Activated B cell treated with CpG ODN at 0.5 μM for 24 hours (primary cell): ENCODE measurements at regions of chr1 and their contacts with region 1.

Region 1: GRCh38 chr1:178542560-178543356 is 29.8 kb downstream of the TEX35 start:
- DNase-seq: peak; percentile 100
- ATAC-seq: peak; percentile 82
- H3K4me3 Mint-ChIP-seq: peak overlapping the region; percentile 97
- H3K27ac Mint-ChIP-seq: peak overlapping the region; percentile 96
- H3K4me1 Mint-ChIP-seq: peaks cover 47% of the 10 kb centered on the region
- H3K27me3 Mint-ChIP-seq: no peaks in the 10 kb centered on the region
- CTCF ChIP-seq: peak; percentile 85

Region 2: GRCh38 chr1:178607718-178608408 is 65.1 kb after region 1 on chr1:
- CTCF ChIA-PET with region 1: interaction called, 18 read pairs
- POLR2A ChIA-PET with region 1: interaction called, 46 read pairs
- intact Hi-C with region 1: loop called (anchors 1 kb)
- DNase-seq: peak; percentile 44
- ATAC-seq: peak; percentile 45
- H3K4me3 Mint-ChIP-seq: peak overlapping the region; percentile 74
- H3K27ac Mint-ChIP-seq: peak overlapping the region; percentile 99
- H3K4me1 Mint-ChIP-seq: peaks cover 92% of the 10 kb centered on the region
- H3K27me3 Mint-ChIP-seq: no peaks in the 10 kb centered on the region
- CTCF ChIP-seq: no peak

Region 3: GRCh38 chr1:178693366-178693765 is 150.6 kb after region 1 on chr1:
- CTCF ChIA-PET with region 1: no interaction called
- POLR2A ChIA-PET with region 1: no interaction called
- intact Hi-C with region 1: no loop called
- DNase-seq: no peak
- ATAC-seq: no peak
- H3K4me3 Mint-ChIP-seq: no peak overlapping the region
- H3K27ac Mint-ChIP-seq: no peak overlapping the region
- H3K4me1 Mint-ChIP-seq: peaks cover 19% of the 10 kb centered on the region
- H3K27me3 Mint-ChIP-seq: no peaks in the 10 kb centered on the region
- CTCF ChIP-seq: no peak

Region 4: DNA sequence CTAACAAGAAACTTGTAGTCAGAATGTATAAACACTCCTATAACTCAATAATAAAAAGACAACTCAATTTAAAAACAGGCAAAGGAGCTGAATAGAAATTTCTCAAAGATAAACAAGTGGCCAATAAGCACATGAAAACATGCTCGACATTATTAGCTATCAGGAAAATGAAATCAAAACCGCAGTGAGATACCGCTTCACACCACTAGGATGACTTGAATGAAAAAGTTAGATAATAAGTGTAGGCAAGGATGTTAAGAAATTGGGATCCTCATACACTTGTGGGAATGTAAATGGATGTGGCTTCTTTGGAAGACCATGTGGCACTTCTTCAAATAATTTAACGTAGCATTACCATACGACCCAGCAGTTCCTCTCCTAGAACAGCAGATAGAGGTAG is 191.2 kb after region 1 on chr1:
- CTCF ChIA-PET with region 1: interaction called, 5 read pairs
- POLR2A ChIA-PET with region 1: interaction called, 5 read pairs
- intact Hi-C with region 1: loop called (anchors 2 kb)
- DNase-seq: no peak
- ATAC-seq: no peak
- H3K4me3 Mint-ChIP-seq: no peak overlapping the region
- H3K27ac Mint-ChIP-seq: peak overlapping the region; percentile 24
- H3K4me1 Mint-ChIP-seq: peaks cover 74% of the 10 kb centered on the region
- H3K27me3 Mint-ChIP-seq: no peaks in the 10 kb centered on the region
- CTCF ChIP-seq: no peak

Region 5: GRCh38 chr1:178784131-178784536 is 241.4 kb after region 1 on chr1:
- CTCF ChIA-PET with region 1: interaction called, 11 read pairs
- POLR2A ChIA-PET with region 1: interaction called, 4 read pairs
- intact Hi-C with region 1: no loop called
- DNase-seq: no peak
- ATAC-seq: peak; percentile 29
- H3K4me3 Mint-ChIP-seq: peak overlapping the region; percentile 8
- H3K27ac Mint-ChIP-seq: peak overlapping the region; percentile 81
- H3K4me1 Mint-ChIP-seq: peaks cover 76% of the 10 kb centered on the region
- H3K27me3 Mint-ChIP-seq: no peaks in the 10 kb centered on the region
- CTCF ChIP-seq: no peak

Region 6: DNA sequence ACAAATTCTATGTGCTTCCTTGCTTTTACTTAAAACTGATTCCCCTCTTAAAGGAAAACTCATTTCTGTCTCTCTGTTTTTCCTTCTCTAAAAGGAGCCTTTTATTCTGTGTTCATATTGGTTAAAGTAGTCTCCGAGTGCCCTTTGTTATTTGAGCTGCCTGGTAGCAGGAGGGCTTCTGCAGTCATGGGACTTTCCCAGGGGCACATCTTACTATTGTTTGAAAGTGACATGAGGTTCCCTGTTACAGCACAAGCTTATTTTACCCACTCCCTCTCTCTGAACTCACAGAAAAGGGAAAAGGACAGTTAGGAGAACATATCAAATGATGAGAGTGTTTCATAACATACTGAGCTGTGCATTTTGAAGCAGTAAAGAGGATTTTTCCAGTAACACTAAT is 386.2 kb after region 1 on chr1:
- CTCF ChIA-PET with region 1: no interaction called
- POLR2A ChIA-PET with region 1: interaction called, 3 read pairs
- intact Hi-C with region 1: loop called (anchors 2 kb)
- DNase-seq: no peak
- ATAC-seq: peak; percentile 57
- H3K4me3 Mint-ChIP-seq: peak overlapping the region; percentile 24
- H3K27ac Mint-ChIP-seq: peak overlapping the region; percentile 80
- H3K4me1 Mint-ChIP-seq: peaks cover 94% of the 10 kb centered on the region
- H3K27me3 Mint-ChIP-seq: no peaks in the 10 kb centered on the region
- CTCF ChIP-seq: no peak